Activated naive CD4-positive, alpha-beta T cell treated with anti-CD3 and anti-CD28 coated beads, Interleukin-2, amount 10 ng/mL, durations not matched to agents 7 days and 5 days (primary cell): ENCODE measurements at regions of chr15 and their contacts with region 1.

Region 1: GRCh38 chr15:40906091-40906990 is 12.1 kb downstream of the VPS18 start:
- DNase-seq: peak; percentile 80
- H3K4me3 Mint-ChIP-seq: peak overlapping the region; percentile 67
- H3K27ac Mint-ChIP-seq: peak overlapping the region; percentile 14
- H3K4me1 Mint-ChIP-seq: peaks cover 48% of the 10 kb centered on the region
- H3K27me3 Mint-ChIP-seq: peaks cover 3% of the 10 kb centered on the region

Region 2: DNA sequence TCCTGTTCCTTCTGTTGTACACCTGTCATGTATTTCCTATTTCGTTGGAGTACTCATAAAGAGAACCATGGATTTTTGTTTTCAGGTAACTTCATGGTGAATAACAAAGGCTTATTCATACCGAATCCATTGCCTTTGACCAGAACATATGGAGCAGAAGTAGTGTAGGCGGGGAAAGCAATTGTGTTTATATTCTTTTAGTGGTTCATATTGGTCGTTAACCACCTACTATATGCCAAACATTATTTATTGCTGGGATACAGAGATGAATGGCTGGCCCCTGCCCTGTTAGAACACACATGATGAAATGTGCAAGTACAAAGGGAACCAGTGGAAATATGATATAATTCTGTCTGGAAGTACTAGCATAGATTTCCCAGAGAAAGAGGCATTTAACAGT is 327.4 kb before region 1 on chr15:
- CTCF ChIA-PET with region 1: no interaction called
- DNase-seq: no peak
- H3K4me3 Mint-ChIP-seq: no peak overlapping the region
- H3K27ac Mint-ChIP-seq: no peak overlapping the region
- H3K4me1 Mint-ChIP-seq: peaks cover 6% of the 10 kb centered on the region
- H3K27me3 Mint-ChIP-seq: no peaks in the 10 kb centered on the region

Region 3: DNA sequence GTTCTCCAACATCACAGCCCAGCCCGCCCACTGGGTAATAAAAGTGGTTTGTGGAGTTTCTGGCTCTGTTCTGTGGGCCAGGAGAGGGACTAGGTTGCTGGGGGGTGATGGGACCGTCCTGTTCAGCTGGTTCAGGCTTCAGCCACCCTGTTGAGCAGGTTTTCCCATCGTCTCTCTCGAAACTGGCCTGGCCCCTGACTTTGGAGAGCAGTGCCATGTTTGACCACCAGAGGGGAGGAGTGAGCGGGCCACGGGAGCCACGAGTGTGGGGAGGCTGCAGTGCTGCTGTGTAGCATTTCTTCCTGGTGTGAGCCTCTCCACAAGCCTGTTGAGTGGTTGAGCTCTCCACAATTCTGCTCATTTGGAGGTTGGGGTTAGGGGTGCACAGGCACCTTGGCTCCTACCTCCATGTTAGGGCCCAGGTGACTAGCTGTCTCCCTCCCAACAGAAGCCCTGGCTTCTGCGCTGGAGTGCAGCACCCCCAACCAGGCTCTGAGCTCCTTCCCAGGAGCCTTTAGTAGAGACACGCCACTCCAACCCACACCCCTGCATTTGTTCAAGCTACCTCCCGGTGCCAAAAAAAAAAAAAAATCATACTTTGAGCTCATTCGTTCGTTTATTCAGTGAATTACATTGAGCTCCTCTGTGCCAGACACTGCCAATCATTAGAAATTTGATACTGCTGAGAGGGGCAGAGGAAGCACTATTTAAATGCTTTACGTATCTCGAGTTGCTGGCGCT is 48.6 kb before region 1 on chr15:
- CTCF ChIA-PET with region 1: interaction called, 252 read pairs
- DNase-seq: peak; percentile 86
- H3K4me3 Mint-ChIP-seq: no peak overlapping the region
- H3K27ac Mint-ChIP-seq: no peak overlapping the region
- H3K4me1 Mint-ChIP-seq: peaks cover 16% of the 10 kb centered on the region
- H3K27me3 Mint-ChIP-seq: peaks cover 19% of the 10 kb centered on the region

Region 4: DNA sequence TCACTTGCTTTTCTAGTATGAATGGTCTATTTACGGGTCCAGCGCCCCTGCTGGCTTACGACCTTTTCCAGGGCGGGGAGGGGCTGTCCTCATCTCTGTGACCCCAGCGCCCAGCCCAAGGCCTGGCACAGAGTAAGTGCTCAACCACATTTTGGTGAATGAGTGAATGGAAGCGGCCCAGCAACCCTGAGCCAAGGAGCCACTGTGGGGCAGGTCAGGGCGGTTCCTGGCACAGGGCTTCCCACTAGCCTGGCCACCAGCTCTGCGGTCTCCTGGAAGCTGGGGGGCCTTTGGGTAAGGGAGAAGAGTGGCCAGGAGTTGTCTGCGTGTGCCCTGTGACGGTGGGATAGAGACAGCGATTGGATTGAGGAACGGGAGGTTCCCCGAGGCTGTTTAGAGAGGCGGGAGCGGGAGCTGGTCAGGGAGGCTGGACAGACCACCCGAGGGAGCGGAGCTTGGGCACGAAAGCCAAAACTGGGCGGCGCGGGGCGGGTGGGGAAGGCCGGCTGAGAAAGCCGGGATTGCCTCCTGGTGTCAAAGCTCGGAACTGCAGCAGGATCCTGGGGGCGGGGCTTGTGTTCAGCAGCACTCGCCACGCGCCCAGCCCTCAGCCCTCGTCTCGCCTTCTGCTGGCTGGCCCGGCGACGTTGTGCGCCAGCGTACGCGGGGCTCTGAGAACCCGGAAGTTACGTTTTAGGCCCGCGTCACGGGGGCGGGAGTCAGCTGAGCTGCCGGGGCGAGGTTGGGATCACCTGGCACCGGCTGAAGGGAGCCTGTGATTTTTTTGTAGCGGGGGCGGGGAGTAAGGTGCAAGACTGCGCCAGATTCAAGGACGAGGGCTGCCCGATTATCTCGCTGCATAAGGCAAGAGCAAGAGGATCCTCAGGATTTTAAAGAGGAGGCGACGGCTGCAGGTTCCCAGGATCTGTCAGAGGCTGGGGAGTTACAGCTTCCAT is 12.3 kb before region 1 on chr15 and contains the start of gene VPS18:
- CTCF ChIA-PET with region 1: interaction called, 42 read pairs
- DNase-seq: peak; percentile 99
- H3K4me3 Mint-ChIP-seq: peak within 1 kb of the TSS; percentile 98
- H3K27ac Mint-ChIP-seq: peak within 1 kb of the TSS; percentile 97
- H3K4me1 Mint-ChIP-seq: peaks cover 24% of the 10 kb centered on the region
- H3K27me3 Mint-ChIP-seq: peaks cover 23% of the 10 kb centered on the region

Region 5: GRCh38 chr15:40928821-40929659 is 22.7 kb after region 1 on chr15 and contains the start of gene DLL4:
- CTCF ChIA-PET with region 1: interaction called, 34 read pairs
- DNase-seq: peak; percentile 66
- H3K4me3 Mint-ChIP-seq: peak within 1 kb of the TSS; percentile 61
- H3K27ac Mint-ChIP-seq: no peak within 1 kb of the TSS
- H3K4me1 Mint-ChIP-seq: peaks cover 50% of the 10 kb centered on the region
- H3K27me3 Mint-ChIP-seq: peaks cover 98% of the 10 kb centered on the region

Region 6: DNA sequence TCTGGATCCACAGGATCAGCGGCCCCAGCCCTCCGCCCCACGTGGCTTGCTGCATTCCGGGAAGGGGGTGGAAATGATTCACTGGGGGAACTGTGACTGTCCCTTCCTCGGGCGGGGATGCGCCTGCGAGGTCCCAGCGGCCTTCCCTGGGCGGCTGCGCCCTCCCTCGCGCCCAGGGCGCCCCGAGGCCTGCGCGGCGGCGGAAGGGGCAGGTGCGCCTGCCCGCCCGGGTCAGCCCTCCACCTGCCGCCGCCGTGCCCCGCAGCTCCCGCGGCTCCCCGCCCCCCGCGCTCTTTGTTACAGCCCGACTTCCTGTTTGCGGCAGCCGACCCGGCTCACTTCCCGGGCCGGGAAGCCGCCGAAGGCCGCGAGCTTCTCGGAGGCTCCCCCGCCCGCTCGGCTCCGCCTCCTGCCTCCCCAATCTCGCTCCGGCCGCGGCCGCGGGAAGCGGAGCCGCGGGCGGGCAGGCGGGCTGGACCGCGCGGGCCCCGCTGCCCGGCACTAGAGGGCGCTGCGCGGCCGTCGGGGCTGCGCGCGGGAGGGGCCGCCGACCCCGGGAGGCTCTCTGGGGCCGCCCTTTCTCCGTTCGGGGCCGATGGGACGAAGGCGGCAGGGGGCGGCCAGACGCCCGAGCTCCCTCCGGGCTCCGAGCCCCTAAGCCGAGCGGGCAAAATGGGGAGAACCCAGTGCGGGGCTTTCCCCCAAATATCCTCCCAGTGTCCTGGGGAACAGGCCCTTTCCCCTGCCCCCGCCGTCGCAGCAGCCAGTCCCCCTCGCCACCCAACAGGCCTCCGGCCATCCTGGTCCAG is 35.4 kb after region 1 on chr15:
- CTCF ChIA-PET with region 1: interaction called, 10 read pairs
- DNase-seq: peak; percentile 85
- H3K4me3 Mint-ChIP-seq: peak overlapping the region; percentile 73
- H3K27ac Mint-ChIP-seq: no peak overlapping the region
- H3K4me1 Mint-ChIP-seq: peaks cover 52% of the 10 kb centered on the region
- H3K27me3 Mint-ChIP-seq: peaks cover 31% of the 10 kb centered on the region

Region 7: GRCh38 chr15:41022487-41023090 is 116.2 kb after region 1 on chr15:
- CTCF ChIA-PET with region 1: interaction called, 54 read pairs
- DNase-seq: peak; percentile 66
- H3K4me3 Mint-ChIP-seq: no peak overlapping the region
- H3K27ac Mint-ChIP-seq: no peak overlapping the region
- H3K4me1 Mint-ChIP-seq: peaks cover 6% of the 10 kb centered on the region
- H3K27me3 Mint-ChIP-seq: no peaks in the 10 kb centered on the region

Region 8: DNA sequence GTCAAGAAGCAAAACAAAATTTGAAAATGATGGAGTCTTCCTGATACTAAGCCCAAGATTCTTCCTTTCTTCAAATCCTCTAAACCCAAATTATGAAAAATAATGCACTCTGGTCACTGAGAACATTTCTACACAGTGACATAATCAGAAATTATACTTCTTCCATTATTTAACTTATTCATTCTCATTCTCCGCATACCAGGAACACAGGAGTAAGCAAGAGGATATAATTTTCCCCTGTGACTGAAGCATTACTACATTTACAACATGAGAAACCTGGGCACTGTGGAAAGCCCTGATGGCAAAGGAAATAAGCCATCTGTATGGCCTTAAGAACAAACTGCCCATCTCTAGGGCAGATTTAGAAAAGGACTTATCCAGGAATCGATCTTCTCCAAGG is 277.2 kb after region 1 on chr15:
- CTCF ChIA-PET with region 1: interaction called, 83 read pairs
- DNase-seq: no peak
- H3K4me3 Mint-ChIP-seq: no peak overlapping the region
- H3K27ac Mint-ChIP-seq: no peak overlapping the region
- H3K4me1 Mint-ChIP-seq: no peaks in the 10 kb centered on the region
- H3K27me3 Mint-ChIP-seq: peaks cover 7% of the 10 kb centered on the region